ENCODE measurements at regions of chr17 and their contacts with region 1.

Region 1: GRCh38 chr17:40615295-40615988 is 32.2 kb downstream of the SMARCE1 start:
- DNase-seq: peak; percentile 74
- ATAC-seq: peak; percentile 86
- H3K4me3 ChIP-seq: no peak overlapping the region
- H3K27ac ChIP-seq: no peak overlapping the region
- H3K4me1 ChIP-seq: no peaks in the 10 kb centered on the region
- H3K27me3 ChIP-seq: no peaks in the 10 kb centered on the region
- CTCF ChIP-seq: peak; percentile 75

Region 2: GRCh38 chr17:40726919-40727318 is 111.5 kb after region 1 on chr17:
- CTCF ChIA-PET with region 1: interaction called, 3 read pairs
- POLR2A ChIA-PET with region 1: no interaction called
- intact Hi-C with region 1: loop called (anchors 1 kb)
- DNase-seq: peak; percentile 40
- ATAC-seq: no peak
- H3K4me3 ChIP-seq: no peak overlapping the region
- H3K27ac ChIP-seq: no peak overlapping the region
- H3K4me1 ChIP-seq: peaks cover 20% of the 10 kb centered on the region
- H3K27me3 ChIP-seq: no peaks in the 10 kb centered on the region
- CTCF ChIP-seq: peak; percentile 55

Region 3: GRCh38 chr17:40791787-40792436 is 176.5 kb after region 1 on chr17:
- CTCF ChIA-PET with region 1: interaction called, 5 read pairs
- POLR2A ChIA-PET with region 1: no interaction called
- intact Hi-C with region 1: loop called (anchors 1 kb)
- DNase-seq: peak; percentile 71
- ATAC-seq: no peak
- H3K4me3 ChIP-seq: no peak overlapping the region
- H3K27ac ChIP-seq: no peak overlapping the region
- H3K4me1 ChIP-seq: no peaks in the 10 kb centered on the region
- H3K27me3 ChIP-seq: no peaks in the 10 kb centered on the region
- CTCF ChIP-seq: peak; percentile 82